GM10248 (cell line): ENCODE measurements at regions of chr12 and their contacts with region 1.

Region 1: DNA sequence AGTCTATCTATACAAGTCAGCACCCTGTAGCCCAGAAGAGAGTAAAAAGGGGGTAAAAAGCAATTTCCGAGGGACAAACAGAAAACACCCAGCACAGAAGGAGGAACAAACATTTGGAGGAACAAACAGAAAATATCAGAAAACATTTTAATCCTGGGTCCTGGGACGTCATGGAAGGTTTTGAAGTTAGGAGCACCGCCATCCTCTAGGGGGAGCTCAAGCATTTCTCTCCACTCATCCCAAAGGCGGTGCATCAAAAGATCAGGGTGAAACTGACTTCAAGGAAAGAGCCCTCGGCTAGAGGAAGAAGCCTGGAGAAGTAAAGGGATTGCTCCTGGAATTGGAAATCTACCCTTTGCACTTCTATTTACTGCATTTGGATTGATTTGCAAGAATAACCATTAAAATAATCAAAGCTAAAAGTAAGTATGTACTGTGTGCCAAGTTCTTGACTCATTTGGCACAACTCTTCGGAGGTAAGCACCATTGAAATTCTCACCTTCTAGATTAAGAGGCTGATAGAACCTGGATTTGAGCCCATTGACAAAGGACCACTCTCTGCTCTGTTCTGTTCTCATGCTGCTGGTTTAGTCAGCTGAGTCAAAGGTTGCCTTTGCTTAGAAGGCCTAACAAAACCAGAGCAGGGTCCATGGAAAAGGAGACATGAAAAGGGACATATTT is 17.2 kb upstream of the POC1B start:
- DNase-seq: peak; percentile 45
- CTCF ChIP-seq: peak; percentile 86

Region 2: DNA sequence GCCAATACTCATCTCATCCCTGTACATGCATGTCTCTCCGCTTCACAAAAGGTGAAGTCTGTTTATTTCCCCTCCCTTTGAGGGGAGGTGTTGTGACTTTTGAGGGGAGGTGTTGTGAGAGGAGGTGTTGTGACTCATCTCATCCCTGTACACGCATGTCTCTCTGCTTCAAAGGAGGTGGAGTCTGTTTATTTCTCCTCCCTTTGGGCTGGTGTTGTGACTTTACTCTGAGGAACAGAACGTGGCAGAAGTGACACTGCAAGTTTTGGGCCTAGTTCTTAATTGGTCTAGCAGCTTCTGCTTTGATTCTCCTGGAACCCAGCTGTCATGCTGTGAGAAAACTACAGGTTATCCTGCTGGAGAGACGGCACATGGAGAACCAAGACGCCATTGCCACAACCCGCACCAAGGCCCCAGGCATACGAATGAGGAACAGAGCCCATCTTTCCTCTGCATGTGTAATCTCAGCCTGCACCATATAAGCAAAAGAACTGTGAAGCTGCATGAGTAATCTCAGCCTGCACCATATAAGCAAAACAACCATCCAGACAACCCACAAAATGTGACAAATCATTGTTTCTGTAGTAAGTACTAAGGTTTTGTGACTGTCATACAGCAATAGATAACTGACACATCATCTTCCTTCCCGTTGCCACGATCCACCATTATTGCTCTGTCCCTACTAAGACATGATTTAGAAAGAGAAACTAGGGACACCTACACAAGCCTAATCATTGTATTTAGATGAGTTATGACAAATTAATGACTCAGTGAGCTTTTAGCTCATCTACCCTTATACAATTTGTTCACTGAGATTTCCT is 48.4 kb before region 1 on chr12:
- CTCF ChIA-PET with region 1: no interaction called
- POLR2A ChIA-PET with region 1: no interaction called
- DNase-seq: peak; percentile 38
- CTCF ChIP-seq: no peak

Region 3: GRCh38 chr12:89524541-89525285 is 18.3 kb before region 1 on chr12 and contains the start of gene GALNT4:
- CTCF ChIA-PET with region 1: interaction called, 12 read pairs
- POLR2A ChIA-PET with region 1: no interaction called
- DNase-seq: peak; percentile 88
- CTCF ChIP-seq: peak; percentile 66

Region 4: DNA sequence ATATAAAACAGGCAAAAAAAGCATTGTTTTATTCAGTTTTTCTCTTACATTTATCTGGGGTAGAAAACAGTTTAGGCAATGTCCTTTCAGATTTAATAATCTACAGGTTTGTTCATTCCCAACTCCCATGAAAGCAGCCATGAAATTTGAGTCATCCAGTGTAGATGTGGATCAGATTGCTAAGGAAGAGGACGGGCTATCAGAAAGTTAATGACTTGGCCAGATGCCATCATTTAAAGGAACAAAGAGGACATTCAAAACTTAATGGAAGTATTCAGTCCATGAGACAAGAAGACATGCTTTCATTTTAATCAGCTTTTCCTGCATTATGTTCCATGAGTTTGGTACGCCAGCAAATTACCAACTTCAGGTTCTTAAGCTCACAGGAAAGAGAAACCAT is 13.9 kb after region 1 on chr12:
- CTCF ChIA-PET with region 1: interaction called, 23 read pairs
- POLR2A ChIA-PET with region 1: no interaction called
- DNase-seq: no peak
- CTCF ChIP-seq: no peak

Region 5: GRCh38 chr12:89566630-89567151 is 23.6 kb after region 1 on chr12:
- CTCF ChIA-PET with region 1: interaction called, 13 read pairs
- POLR2A ChIA-PET with region 1: no interaction called
- DNase-seq: no peak
- CTCF ChIP-seq: no peak

Region 6: DNA sequence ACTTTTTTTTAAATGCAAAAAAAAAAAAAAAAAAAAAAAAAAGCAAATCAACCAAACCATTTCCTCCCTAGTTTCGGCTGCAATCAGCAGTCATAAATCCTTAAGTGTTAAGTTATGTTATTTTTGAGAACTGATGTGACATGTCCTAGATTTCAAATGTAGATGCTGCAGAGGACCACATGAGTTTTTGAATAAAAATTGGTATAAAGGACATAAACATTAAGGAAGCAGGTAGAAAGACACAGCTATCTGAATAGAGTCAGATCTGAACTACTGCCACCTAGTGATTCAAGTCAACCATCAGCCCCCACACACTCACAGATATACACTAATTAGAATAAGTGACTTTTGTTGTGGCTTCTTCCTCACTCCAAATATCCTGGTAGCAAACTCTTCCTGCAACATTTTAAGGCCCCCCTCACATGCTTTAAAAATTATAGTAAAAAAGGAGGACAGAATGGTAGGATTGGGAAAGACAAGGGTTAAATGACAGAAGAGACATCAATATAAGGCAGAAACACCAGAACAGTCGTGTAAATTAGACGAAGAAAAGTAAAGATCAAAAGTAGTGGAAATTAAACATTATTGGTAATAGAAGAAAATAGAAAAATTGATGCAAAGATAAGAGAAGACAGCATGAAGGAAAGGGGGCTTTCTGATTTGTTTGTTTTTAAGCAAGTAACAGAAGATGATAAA is 560.1 kb after region 1 on chr12:
- CTCF ChIA-PET with region 1: interaction called, 60 read pairs
- POLR2A ChIA-PET with region 1: no interaction called
- DNase-seq: peak; percentile 20
- CTCF ChIP-seq: peak; percentile 64